Natural killer cell (primary cell): ENCODE measurements at regions of chr20 and their contacts with region 1.

Region 1: DNA sequence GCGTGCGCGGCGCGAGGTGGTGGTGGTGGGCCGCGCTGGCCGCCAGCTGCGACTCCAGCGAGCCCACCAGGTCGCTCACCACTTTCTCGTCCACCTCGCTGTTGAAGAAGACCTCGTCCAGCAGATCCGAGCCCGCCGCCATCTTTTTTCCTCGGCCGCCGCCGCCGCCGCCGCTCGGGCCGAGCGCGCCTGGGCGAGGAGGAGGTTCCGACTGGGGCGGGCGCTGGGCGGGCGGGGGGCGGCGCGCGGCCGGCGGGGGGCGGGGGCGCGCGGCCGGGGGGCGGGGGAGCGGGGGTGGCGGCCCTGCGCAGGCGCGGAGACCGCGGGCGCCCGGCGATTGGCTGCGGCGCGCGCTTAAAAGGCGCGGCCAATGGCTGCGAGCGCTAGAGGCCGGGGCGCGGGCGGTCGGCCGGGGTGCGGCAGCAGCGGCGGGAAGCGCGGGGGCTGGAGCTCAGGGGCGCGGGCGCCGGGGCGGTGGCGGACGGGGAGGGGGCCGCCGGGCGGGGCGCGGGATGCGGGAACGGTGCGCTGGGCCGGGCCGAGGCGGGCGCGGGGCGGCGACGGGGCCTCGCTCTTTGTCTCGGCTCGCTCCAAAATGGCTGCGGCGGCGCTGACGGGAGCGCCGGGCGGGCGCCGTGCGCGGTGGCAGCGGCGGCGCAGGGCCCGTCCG is at the start of gene TAF4:
- DNase-seq: peak; percentile 81 to 93
- ATAC-seq: peak; percentile 82 to 90 (median 83)
- H3K4me3 ChIP-seq: peak within 1 kb of the TSS; percentile 61
- H3K4me3 Mint-ChIP-seq: peak within 1 kb of the TSS; percentile 94
- H3K27ac ChIP-seq: peak within 1 kb of the TSS; percentile 67
- H3K27ac Mint-ChIP-seq: peak within 1 kb of the TSS; percentile 87 to 88
- H3K4me1 ChIP-seq: peaks cover 38% of the 10 kb centered on the region
- H3K4me1 Mint-ChIP-seq: peaks cover 31 to 42% of the 10 kb centered on the region in 2 donors
- H3K27me3 ChIP-seq: peaks cover 2% of the 10 kb centered on the region
- H3K27me3 Mint-ChIP-seq: peaks cover 6% of the 10 kb centered on the region in 2 donors
- CTCF ChIP-seq: no peak
- total RNA-seq, gene TAF4: 30.0 to 35.1 (median 30.3) TPM

Region 2: GRCh38 chr20:61588411-61589386 is 477.1 kb before region 1 on chr20:
- intact Hi-C with region 1: no loop called
- DNase-seq: no peak
- ATAC-seq: no peak
- H3K4me3 ChIP-seq: no peak overlapping the region
- H3K4me3 Mint-ChIP-seq: no peak overlapping the region
- H3K27ac ChIP-seq: no peak overlapping the region
- H3K27ac Mint-ChIP-seq: no peak overlapping the region
- H3K4me1 ChIP-seq: no peaks in the 10 kb centered on the region
- H3K4me1 Mint-ChIP-seq: no peaks in the 10 kb centered on the region
- H3K27me3 ChIP-seq: no peaks in the 10 kb centered on the region
- H3K27me3 Mint-ChIP-seq: no peaks in the 10 kb centered on the region
- CTCF ChIP-seq: no peak

Region 3: GRCh38 chr20:62032609-62033368 is 33.0 kb before region 1 on chr20:
- intact Hi-C with region 1: no loop called
- DNase-seq: no peak
- ATAC-seq: no peak
- H3K4me3 ChIP-seq: no peak overlapping the region
- H3K4me3 Mint-ChIP-seq: no peak overlapping the region
- H3K27ac ChIP-seq: no peak overlapping the region
- H3K27ac Mint-ChIP-seq: peak overlapping the region in 1 of 2 donors; percentile 81
- H3K4me1 ChIP-seq: peaks cover 19% of the 10 kb centered on the region
- H3K4me1 Mint-ChIP-seq: peaks cover 48 to 64% of the 10 kb centered on the region in 2 donors
- H3K27me3 ChIP-seq: no peaks in the 10 kb centered on the region
- H3K27me3 Mint-ChIP-seq: no peaks in the 10 kb centered on the region
- CTCF ChIP-seq: no peak

Region 4: DNA sequence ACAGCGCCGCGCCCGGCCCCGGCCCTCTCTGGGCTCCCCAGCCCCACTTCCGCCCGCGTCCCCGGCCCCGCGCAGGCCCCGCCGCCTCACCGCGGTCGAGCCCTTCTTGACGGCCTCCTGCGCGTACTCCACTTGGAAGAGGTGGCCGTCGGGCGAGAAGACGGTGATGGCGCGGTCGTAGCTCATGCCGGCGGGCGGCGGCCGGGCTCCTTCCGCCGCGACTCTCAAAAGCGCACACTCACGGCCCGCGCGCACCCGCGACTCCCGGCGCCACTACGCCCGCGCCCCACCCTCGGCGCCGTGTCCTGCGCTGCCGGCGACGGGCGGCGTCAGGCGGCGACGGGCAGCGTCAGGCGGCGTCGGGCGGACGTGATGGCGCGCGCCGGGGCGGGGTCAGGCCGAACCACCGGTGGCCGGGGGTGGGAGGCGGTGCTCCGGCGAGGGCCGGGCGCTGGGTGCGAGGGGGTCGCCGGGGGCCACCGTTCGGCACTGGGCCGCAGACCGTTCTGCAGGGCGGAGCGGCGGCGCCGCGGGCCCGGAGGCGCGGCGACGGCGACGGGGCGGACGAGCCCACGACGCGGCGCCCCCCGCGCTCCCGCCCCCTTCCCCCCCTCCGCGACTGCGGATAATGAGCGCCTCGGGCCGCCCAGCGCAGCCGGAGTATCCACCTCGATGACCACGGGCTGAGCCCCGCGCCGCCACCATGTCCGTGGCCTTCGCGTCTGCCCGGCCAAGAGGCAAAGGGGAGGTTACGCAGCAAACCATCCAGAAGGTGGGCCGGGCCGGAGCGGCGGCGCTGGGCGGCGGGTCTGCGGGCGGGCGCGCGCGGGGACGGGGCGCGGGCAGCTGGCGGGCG is 77.5 kb after region 1 on chr20 and contains the starts of genes PSMA7 and SS18L1:
- intact Hi-C with region 1: loop called (anchors 5 kb)
- DNase-seq: peak; percentile 86 to 95
- ATAC-seq: peak; percentile 87 to 95 (median 88)
- H3K4me3 ChIP-seq: peak within 1 kb of the TSS; percentile 55
- H3K4me3 Mint-ChIP-seq: peak within 1 kb of the TSS; percentile 91
- H3K27ac ChIP-seq: peak within 1 kb of the TSS; percentile 75
- H3K27ac Mint-ChIP-seq: peak within 1 kb of the TSS; percentile 79 to 90
- H3K4me1 ChIP-seq: peaks cover 30% of the 10 kb centered on the region
- H3K4me1 Mint-ChIP-seq: peaks cover 44 to 54% of the 10 kb centered on the region in 2 donors
- H3K27me3 ChIP-seq: no peaks in the 10 kb centered on the region
- H3K27me3 Mint-ChIP-seq: no peaks in the 10 kb centered on the region
- CTCF ChIP-seq: no peak
- total RNA-seq, gene PSMA7: 154 to 177 (median 168) TPM
- total RNA-seq, gene SS18L1: 19.1 to 26.0 (median 23.7) TPM